ENCODE measurements at regions of chr3 and their contacts with region 1.

Region 1: DNA sequence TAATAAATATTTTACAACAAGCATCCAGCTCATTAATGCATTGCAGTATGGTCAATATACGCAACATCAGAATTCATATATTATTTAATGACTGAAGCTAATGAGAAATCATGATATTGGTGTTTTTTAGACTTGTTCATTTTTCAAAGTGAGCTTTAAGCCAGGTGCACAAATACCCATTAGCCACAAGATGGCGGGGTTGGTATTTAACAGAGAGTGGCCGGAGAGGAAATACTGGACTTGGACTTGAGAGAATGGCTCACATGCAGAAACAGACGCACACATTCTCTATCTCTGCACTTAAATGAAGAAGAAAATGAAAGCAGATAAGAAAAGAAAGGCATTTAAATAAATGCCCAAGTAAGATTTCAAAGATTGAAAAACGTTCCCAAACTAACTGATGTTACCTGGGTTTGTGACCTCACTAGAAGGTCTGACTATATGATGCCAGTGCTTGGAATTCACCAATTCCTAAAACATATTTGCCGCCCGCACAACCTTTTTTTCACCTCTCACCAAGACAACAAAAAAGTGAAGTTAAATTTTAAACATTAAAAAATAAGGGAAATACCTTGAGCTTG is 21.2 kb upstream of the CRBN start:
- ATAC-seq: peak; percentile 48 to 79 (median 68)
- H3K4me3 ChIP-seq: no peak overlapping the region
- H3K27ac ChIP-seq: no peak overlapping the region
- H3K4me1 ChIP-seq: peaks cover 0 to 8% of the 10 kb centered on the region in 2 donors

Region 2: GRCh38 chr3:3615533-3615932 is 414.8 kb after region 1 on chr3:
- in situ Hi-C with region 1: loop called in 1 of 9 experiments (anchors 25 kb)
- ATAC-seq: no peak
- H3K4me3 ChIP-seq: no peak overlapping the region
- H3K27ac ChIP-seq: no peak overlapping the region
- H3K4me1 ChIP-seq: no peaks in the 10 kb centered on the region

Region 3: GRCh38 chr3:3799173-3800079 is 598.7 kb after region 1 on chr3 and contains the start of gene LRRN1:
- in situ Hi-C with region 1: loop called in 1 of 9 experiments (anchors 25 kb)
- ATAC-seq: peak; percentile 41 to 90 (median 87)
- H3K4me3 ChIP-seq: peak within 1 kb of the TSS; percentile 73 to 93 (median 81)
- H3K27ac ChIP-seq: peak within 1 kb of the TSS; percentile 77 to 92
- H3K4me1 ChIP-seq: peaks cover 11 to 26% of the 10 kb centered on the region in 2 donors
- total RNA-seq, gene LRRN1: 0.97 to 188 (median 24.8) TPM

Region 4: GRCh38 chr3:3998140-3998922 is 797.6 kb after region 1 on chr3:
- in situ Hi-C with region 1: loop called in 2 of 9 experiments (anchors 25 kb)
- ATAC-seq: peak in 3 of 8 experiments; percentile 43 to 81 (median 72)
- H3K4me3 ChIP-seq: no peak overlapping the region
- H3K27ac ChIP-seq: no peak overlapping the region
- H3K4me1 ChIP-seq: peaks cover 0 to 6% of the 10 kb centered on the region in 2 donors

Region 5: GRCh38 chr3:4271834-4272233 is 1071.1 kb after region 1 on chr3:
- in situ Hi-C with region 1: loop called (anchors 10 to 25 kb)
- ATAC-seq: peak in 4 of 8 experiments; percentile 43 to 78 (median 58)
- H3K4me3 ChIP-seq: no peak overlapping the region
- H3K27ac ChIP-seq: no peak overlapping the region
- H3K4me1 ChIP-seq: no peaks in the 10 kb centered on the region

Region 6: DNA sequence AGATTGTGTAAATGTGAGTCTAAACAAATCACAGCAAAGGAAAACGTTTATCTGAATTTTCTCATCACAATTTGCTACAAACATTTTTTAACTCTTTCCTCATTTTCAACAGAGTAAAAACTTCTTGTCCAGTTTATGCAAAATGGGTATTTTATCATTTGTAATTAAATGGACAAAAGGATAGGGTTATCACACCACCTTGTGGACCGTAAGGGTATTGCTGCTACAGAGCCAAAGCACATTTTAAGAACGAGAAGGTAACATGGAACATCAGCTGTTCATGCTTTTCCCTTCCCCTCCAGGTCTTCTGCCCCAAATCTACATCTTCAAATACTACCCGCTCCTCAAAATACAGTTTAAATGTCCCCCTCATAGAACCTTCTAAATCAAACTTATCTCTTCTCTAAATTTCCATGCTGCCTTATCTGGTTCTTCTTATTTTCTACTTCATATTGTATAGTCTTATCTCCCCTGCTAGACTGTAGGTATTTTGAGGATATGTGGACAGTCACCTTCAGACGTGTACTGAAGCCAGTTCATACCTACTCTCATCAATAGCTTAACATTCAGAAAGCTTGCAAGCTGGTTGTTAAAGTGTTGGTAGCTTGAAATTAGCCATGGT is 1089.7 kb after region 1 on chr3:
- in situ Hi-C with region 1: loop called in 8 of 9 experiments (anchors 25 kb)
- ATAC-seq: peak in 2 of 8 experiments; percentile 27 to 32
- H3K4me3 ChIP-seq: no peak overlapping the region
- H3K27ac ChIP-seq: no peak overlapping the region
- H3K4me1 ChIP-seq: peaks cover 17 to 26% of the 10 kb centered on the region in 2 donors

Measured in motor neuron (in vitro differentiated cells).